ENCODE measurements at regions of chr18 and their contacts with region 1.

Region 1: DNA sequence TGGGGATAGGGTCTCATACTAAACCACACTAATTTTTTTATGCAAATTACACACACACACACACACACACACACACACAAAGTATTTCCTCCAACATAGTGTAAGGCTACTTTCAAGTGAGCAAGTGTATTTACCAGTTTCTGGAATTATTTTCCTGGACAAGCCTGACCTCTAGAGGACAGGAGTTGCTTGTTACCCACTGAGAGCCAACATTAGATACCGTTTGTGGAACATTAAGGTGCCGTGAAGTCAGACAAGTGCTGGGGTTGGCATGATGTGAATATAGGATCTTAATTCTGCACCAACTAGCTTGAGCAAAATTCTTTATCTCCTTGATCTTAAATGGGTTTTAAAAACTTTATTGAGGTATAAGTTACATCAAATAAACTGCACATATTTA is 39.3 kb upstream of the SERPINB2 start:
- DNase-seq: peak; percentile 84
- ATAC-seq: peak; percentile 70
- H3K4me3 ChIP-seq: no peak overlapping the region
- H3K27ac ChIP-seq: no peak overlapping the region
- H3K4me1 ChIP-seq: peaks cover 5% of the 10 kb centered on the region; the same call in 1 of the 2 replicates
- H3K27me3 ChIP-seq: no peaks in the 10 kb centered on the region
- CTCF ChIP-seq: peak; percentile 85

Region 2: GRCh38 chr18:63511286-63511685 is 336.9 kb before region 1 on chr18:
- CTCF ChIA-PET with region 1: no interaction called
- POLR2A ChIA-PET with region 1: no interaction called
- intact Hi-C with region 1: loop called (anchors 1 kb)
- DNase-seq: peak; percentile 87
- ATAC-seq: peak; percentile 87
- H3K4me3 ChIP-seq: no peak overlapping the region
- H3K27ac ChIP-seq: no peak overlapping the region
- H3K4me1 ChIP-seq: no peaks in the 10 kb centered on the region
- H3K27me3 ChIP-seq: no peaks in the 10 kb centered on the region
- CTCF ChIP-seq: peak; percentile 85

Region 3: DNA sequence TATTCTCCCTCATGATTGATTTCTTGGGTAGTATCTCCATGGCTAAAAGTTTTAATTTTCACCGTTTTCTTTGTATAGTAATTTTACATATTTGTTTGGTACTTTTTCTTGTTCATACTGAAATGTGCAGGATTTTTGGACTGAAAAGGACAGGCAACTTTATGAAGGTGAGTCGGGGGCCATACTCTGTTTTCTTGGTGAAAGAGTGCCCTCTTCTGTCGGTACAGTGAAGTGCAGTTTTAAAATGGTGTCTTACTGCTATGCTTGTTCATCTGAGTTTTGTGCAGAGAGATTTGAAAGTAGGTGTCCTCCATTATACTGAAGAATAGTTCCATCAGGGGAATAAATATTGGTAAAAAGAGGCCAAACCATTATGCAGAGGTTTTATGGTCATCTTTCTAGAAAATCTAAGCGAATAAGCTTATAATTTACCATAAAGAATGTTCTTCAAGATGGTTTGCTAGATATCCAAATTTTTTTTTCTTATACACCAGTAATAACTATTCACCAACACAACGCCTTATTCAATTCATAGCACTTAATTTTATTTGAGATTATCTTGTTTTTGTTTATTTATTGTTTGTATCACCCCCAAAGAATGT is 269.7 kb before region 1 on chr18:
- CTCF ChIA-PET with region 1: no interaction called
- POLR2A ChIA-PET with region 1: no interaction called
- intact Hi-C with region 1: loop called (anchors 2 kb)
- DNase-seq: peak; percentile 69
- ATAC-seq: peak; percentile 48; the same call in 1 of the 2 replicates
- H3K4me3 ChIP-seq: no peak overlapping the region
- H3K27ac ChIP-seq: no peak overlapping the region
- H3K4me1 ChIP-seq: no peaks in the 10 kb centered on the region
- H3K27me3 ChIP-seq: no peaks in the 10 kb centered on the region
- CTCF ChIP-seq: peak; percentile 90

Region 4: GRCh38 chr18:63683152-63683551 is 165.0 kb before region 1 on chr18:
- CTCF ChIA-PET with region 1: no interaction called
- POLR2A ChIA-PET with region 1: no interaction called
- intact Hi-C with region 1: loop called (anchors 1 kb)
- DNase-seq: peak; percentile 97
- ATAC-seq: peak; percentile 87
- H3K4me3 ChIP-seq: peak overlapping the region; percentile 36; the same call in 1 of the 2 replicates
- H3K27ac ChIP-seq: peak overlapping the region; percentile 100
- H3K4me1 ChIP-seq: peaks cover 48% of the 10 kb centered on the region
- H3K27me3 ChIP-seq: no peaks in the 10 kb centered on the region
- CTCF ChIP-seq: no peak

Region 5: DNA sequence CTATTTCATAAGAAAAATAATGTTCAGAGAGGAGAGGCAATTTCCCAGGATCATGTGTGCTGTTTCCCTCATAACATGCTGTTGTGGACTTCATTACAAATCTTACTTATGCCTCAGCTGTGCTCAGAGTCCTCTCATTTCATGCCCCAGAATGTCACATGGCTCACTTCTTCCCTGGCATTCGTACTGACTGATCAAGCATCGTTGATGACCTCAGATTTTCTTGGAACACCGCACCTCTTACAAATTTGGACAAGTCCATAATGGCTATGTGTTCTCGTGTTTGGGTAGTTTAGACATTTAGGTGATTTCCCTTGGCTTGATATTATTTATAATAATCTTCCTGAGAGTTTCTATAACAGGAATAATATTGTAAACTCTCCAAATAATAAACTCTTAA is 40.0 kb before region 1 on chr18:
- CTCF ChIA-PET with region 1: no interaction called
- POLR2A ChIA-PET with region 1: no interaction called
- intact Hi-C with region 1: no loop called
- DNase-seq: no peak
- ATAC-seq: no peak
- H3K4me3 ChIP-seq: no peak overlapping the region
- H3K27ac ChIP-seq: no peak overlapping the region
- H3K4me1 ChIP-seq: no peaks in the 10 kb centered on the region
- H3K27me3 ChIP-seq: no peaks in the 10 kb centered on the region
- CTCF ChIP-seq: no peak

Region 6: DNA sequence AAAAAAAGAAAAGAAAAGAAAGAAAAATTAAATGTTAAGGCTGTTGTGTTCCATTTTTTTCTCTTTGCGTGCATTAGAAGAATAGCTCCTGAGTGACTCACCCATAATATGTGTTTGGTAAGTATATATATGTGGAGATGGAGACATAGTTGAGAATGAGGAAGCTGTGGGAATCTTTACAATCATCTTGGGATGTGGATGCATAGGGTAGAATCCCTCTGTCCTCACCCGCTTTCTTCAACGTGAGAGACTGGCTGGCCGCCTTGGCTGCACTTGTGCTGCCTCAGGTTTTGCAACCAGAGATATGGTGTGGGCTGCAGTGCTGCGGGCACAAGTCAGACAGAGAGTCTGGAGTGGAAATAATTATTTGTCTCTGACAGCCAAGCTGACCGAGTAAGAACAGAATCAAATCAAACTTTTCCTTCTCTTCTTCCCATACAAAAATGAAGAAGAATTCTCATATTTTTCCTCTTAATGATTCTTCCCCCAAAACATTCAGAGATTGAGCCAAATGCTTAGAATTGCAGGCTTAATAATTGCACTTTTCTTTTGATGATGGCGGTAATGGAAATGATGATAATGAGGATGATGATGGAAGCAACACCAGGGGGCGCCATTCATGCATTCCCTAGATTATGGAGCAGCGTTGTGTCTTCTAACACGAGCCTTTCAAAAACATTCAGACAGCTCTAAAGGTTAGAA is 24.5 kb before region 1 on chr18:
- CTCF ChIA-PET with region 1: no interaction called
- POLR2A ChIA-PET with region 1: no interaction called
- intact Hi-C with region 1: loop called (anchors 1 kb)
- DNase-seq: peak; percentile 80
- ATAC-seq: peak; percentile 74
- H3K4me3 ChIP-seq: no peak overlapping the region
- H3K27ac ChIP-seq: peak overlapping the region; percentile 97
- H3K4me1 ChIP-seq: peaks cover 50% of the 10 kb centered on the region
- H3K27me3 ChIP-seq: no peaks in the 10 kb centered on the region
- CTCF ChIP-seq: peak; percentile 72

Region 7: GRCh38 chr18:63859781-63860475 is 11.8 kb after region 1 on chr18:
- CTCF ChIA-PET with region 1: no interaction called
- POLR2A ChIA-PET with region 1: no interaction called
- intact Hi-C with region 1: no loop called
- DNase-seq: no peak
- ATAC-seq: no peak
- H3K4me3 ChIP-seq: no peak overlapping the region
- H3K27ac ChIP-seq: no peak overlapping the region
- H3K4me1 ChIP-seq: no peaks in the 10 kb centered on the region
- H3K27me3 ChIP-seq: no peaks in the 10 kb centered on the region
- CTCF ChIP-seq: no peak

Region 8: GRCh38 chr18:63979409-63979920 is 131.3 kb after region 1 on chr18:
- CTCF ChIA-PET with region 1: no interaction called
- POLR2A ChIA-PET with region 1: no interaction called
- intact Hi-C with region 1: loop called (anchors 2 kb)
- DNase-seq: peak; percentile 79
- ATAC-seq: peak; percentile 71
- H3K4me3 ChIP-seq: no peak overlapping the region
- H3K27ac ChIP-seq: no peak overlapping the region
- H3K4me1 ChIP-seq: 0 out of 2 replicates have a peak, but pooled peaks cover 3% of the 10 kb centered on the region
- H3K27me3 ChIP-seq: no peaks in the 10 kb centered on the region
- CTCF ChIP-seq: peak; percentile 90

Measured in PC-3 (cell line).